Heart left ventricle (tissue), 16 donors: ENCODE measurements at regions of chr3 and their contacts with region 1.

Region 1: GRCh38 chr3:177220136-177220974 is 23.1 kb upstream of the TBL1XR1 start:
- DNase-seq: no peak
- ATAC-seq: no peak
- H3K4me3 ChIP-seq: no peak overlapping the region
- H3K27ac ChIP-seq: no peak overlapping the region
- H3K4me1 ChIP-seq: peaks cover 0 to 16% (median 0%) of the 10 kb centered on the region in 12 donors
- H3K27me3 ChIP-seq: no peaks in the 10 kb centered on the region
- CTCF ChIP-seq: no peak
- POLR2A ChIP-seq: no peak

Region 2: DNA sequence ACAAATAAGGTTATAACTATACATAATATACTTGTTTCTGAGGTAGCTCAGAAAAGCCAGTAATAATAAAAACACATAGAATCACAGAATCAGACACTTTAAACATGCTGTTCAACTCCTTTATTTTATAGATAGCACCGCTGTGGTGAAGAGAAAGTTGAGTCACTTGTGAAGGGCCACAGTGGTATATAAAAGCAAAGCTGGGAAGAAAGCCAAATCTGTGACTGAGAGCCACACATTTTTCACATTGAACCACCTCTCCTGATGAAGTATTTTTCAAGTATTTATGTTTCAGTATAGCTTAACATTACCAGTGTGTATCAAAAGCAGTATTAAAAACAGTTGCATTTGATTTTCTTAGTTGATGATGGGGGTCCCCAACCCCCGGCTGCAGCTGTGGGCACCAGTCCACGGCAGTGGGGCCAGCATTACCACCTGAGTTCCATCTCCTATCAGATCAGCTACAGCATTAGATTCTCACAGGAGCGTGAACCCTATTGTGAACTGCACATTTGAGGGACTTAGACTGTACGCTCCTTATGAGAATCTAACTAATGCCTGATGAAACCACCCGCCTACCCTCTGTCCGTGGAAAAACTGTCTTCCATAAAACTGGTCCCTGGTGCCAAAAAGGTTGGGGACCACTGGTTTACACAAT is 69.3 kb before region 1 on chr3:
- intact Hi-C with region 1: no loop called
- DNase-seq: no peak
- ATAC-seq: peak in 3 of 4 donors; percentile 29 to 48 (median 38)
- H3K4me3 ChIP-seq: no peak overlapping the region
- H3K27ac ChIP-seq: peak overlapping the region in 1 of 12 donors; percentile 1
- H3K4me1 ChIP-seq: peaks cover 0 to 70% (median 49%) of the 10 kb centered on the region in 12 donors
- H3K27me3 ChIP-seq: no peaks in the 10 kb centered on the region
- CTCF ChIP-seq: no peak
- POLR2A ChIP-seq: no peak

Region 3: GRCh38 chr3:177279118-177279815 is 58.9 kb after region 1 on chr3:
- intact Hi-C with region 1: loop called in 2 of 10 experiments (anchors 5 to 10 kb)
- DNase-seq: no peak
- ATAC-seq: no peak
- H3K4me3 ChIP-seq: no peak overlapping the region
- H3K27ac ChIP-seq: no peak overlapping the region
- H3K4me1 ChIP-seq: peaks cover 0 to 23% (median 1%) of the 10 kb centered on the region in 12 donors
- H3K27me3 ChIP-seq: no peaks in the 10 kb centered on the region
- CTCF ChIP-seq: no peak
- POLR2A ChIP-seq: no peak

Region 4: DNA sequence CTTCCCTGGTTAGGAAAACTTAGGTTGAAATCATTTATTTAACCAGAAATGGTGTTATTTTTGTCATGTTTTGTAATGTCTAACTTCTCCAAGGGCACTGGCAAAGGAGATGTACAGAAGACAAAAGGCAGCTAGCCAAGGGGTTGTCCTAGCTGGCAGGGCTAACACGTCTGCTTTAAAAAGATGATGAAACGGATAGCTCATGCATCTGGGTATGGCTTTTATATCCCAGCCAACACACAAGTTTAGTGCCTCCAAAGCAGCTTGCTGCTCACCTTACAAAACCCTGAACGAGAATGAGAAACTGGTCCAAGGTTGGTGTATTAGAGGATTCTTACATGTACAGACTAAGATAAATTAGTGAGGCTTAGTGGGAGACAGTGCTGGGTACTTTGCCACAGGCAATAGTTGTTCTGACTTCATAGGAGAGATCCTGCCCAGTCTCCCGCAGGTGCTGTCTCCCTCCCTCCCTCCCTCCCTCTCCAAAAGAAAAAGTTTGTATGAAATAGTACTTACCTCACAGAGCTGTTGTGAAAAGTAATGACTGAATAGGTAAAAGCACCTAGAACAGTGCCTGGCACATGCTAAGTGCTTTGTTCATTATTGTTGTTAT is 1363.7 kb after region 1 on chr3:
- intact Hi-C with region 1: no loop called
- DNase-seq: no peak
- ATAC-seq: peak; percentile 26 to 60 (median 57)
- H3K4me3 ChIP-seq: no peak overlapping the region
- H3K27ac ChIP-seq: no peak overlapping the region
- H3K4me1 ChIP-seq: peaks cover 0 to 21% (median 0%) of the 10 kb centered on the region in 12 donors
- H3K27me3 ChIP-seq: no peaks in the 10 kb centered on the region
- CTCF ChIP-seq: no peak
- POLR2A ChIP-seq: no peak